Adrenal gland (tissue), 19 donors: ENCODE measurements at regions of chr12 and their contacts with region 1.

Region 1: DNA sequence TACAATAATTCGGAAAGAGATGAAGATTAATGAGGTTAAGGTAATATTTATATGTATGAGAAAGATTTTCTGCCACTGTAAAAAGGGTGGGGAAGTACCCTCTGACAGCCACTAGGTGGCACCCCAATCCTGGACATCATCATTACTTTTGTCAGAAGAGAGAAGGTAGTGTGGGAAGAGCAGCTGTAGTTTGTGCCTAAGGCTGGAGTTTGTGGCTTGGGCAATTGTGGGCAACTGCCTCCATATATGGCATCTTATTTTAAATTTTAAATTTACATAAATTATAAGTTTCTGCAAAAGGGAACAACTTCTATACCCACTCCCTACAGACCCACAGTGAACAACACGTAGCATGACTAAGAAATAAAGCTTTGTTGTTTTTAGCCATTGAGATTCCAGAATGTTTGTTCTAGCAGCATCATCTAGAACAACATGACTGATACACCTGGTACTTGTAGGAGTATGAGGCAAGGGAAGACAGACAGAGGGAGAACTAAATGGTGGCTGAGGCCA is 34.4 kb upstream of the SYCP3 start:
- DNase-seq: peak; percentile 54 to 83 (median 61)
- H3K4me3 ChIP-seq: no peak overlapping the region
- H3K27ac ChIP-seq: no peak overlapping the region
- H3K4me1 ChIP-seq: no peaks in the 10 kb centered on the region
- H3K27me3 ChIP-seq: no peaks in the 10 kb centered on the region
- CTCF ChIP-seq: peak; percentile 93 to 99 (median 94)
- POLR2A ChIP-seq: no peak

Region 2: DNA sequence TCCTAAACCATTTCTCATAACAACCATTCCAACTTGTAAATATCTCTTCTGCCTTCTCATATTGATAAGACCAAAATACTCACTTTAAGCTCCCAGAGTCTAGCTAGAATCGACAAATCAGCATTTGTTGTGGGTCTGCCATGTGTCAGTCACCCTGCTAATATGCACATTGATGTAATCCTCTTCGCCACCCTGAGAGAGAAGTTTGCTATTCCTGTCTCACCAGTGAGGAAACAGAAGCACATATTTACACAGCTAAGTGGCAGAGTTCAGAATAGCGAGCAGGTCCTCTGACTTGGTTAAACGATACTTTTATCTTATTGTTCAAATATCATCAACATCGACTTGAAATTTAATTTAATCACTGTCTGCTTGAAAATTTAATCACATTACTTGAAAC is 837.0 kb before region 1 on chr12:
- intact Hi-C with region 1: no loop called
- DNase-seq: no peak
- H3K4me3 ChIP-seq: no peak overlapping the region
- H3K27ac ChIP-seq: no peak overlapping the region
- H3K4me1 ChIP-seq: no peaks in the 10 kb centered on the region
- H3K27me3 ChIP-seq: no peaks in the 10 kb centered on the region
- CTCF ChIP-seq: no peak
- POLR2A ChIP-seq: no peak

Region 3: GRCh38 chr12:101839324-101840283 is 65.9 kb after region 1 on chr12:
- intact Hi-C with region 1: loop called in 1 of 2 experiments (anchors 5 kb)
- DNase-seq: peak; percentile 59 to 85 (median 72)
- H3K4me3 ChIP-seq: no peak overlapping the region
- H3K27ac ChIP-seq: no peak overlapping the region
- H3K4me1 ChIP-seq: no peaks in the 10 kb centered on the region
- H3K27me3 ChIP-seq: no peaks in the 10 kb centered on the region
- CTCF ChIP-seq: peak; percentile 73 to 89 (median 82)
- POLR2A ChIP-seq: no peak